Activated T-helper 1 cell treated with anti-CD3 and anti-CD28 coated beads, Interleukin-12 subunit alpha, Interleukin-12 subunit beta, Interleukin-2, Interleukin-4 antibody, amounts not matched to agents 30 ng/mL and 10 ng/mL and 1 ng/mL, durations not matched to agents 14 hours and 24 hours and 36 hours (primary cell): ENCODE measurements at regions of chr5 and their contacts with region 1.

Region 1: DNA sequence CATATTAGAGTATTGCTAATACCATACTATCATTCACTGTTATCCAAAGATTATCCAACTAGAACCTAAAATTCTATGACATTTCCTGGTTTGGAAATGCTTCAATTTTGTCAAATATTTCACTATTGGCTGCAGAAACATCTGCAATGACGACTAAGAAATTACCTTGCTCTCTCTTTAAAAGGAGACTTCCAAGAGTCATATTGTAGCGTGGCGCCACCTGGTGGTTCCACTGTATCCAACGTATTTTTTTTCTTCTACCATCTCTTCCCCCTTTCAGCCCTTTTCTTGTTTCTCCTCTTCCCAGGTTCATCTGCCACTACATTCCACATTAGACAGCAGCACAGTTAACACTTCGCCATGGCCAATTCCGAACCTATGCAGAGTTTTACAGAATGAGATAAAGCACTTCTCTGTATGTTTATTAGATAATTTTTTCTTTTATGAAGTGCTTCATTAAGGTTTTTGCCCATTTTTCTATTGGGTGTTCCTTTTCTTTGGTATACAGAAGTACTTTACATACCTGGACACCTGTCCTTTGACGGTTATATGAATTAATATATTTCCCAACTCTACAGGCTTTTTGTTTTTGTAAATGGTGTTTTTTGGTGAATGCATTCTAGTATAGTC is 153.5 kb downstream of the CDC42SE2 start:
- DNase-seq: peak; percentile 65
- H3K4me3 Mint-ChIP-seq: peak overlapping the region; percentile 32
- H3K27ac Mint-ChIP-seq: peak overlapping the region; percentile 59
- H3K4me1 Mint-ChIP-seq: peaks cover 37% of the 10 kb centered on the region
- H3K27me3 Mint-ChIP-seq: no peaks in the 10 kb centered on the region

Region 2: GRCh38 chr5:130109152-130109551 is 1308.2 kb before region 1 on chr5:
- intact Hi-C with region 1: loop called (anchors 5 kb)
- DNase-seq: no peak
- H3K4me3 Mint-ChIP-seq: no peak overlapping the region
- H3K27ac Mint-ChIP-seq: no peak overlapping the region
- H3K4me1 Mint-ChIP-seq: no peaks in the 10 kb centered on the region
- H3K27me3 Mint-ChIP-seq: peaks cover 2% of the 10 kb centered on the region

Region 3: DNA sequence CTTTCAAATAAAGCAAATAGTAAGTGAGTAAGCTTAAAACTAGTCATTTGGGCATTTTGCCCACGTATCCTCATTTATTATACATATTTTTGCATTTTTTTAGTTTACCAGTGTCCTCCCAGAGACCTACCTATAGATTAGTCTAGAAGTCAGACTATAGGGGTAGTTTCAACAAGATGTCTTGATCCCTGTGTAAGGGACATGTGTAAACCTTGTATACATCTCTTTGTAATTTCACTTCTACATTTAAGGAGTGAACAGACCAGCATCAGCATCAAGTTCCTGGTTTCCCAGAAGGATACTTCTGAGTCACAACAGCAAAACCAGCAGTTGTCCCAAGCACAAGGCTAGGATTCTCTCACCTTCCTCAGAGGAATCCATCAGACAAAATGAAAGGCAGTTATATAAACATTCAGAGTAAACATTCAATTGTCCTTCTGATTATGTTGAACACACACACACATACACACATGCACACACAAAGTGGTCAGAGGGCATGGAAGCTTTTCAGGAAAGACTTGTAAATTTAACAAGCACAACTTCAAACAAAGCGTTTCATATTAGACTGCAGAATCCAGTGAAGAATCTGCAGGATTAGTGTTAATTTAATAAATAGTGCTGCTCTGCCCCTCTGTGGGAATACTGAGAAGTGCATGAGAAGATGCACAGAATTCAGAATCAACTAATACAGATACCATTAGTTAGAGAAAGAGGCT is 307.7 kb before region 1 on chr5:
- intact Hi-C with region 1: loop called (anchors 1 kb)
- DNase-seq: peak; percentile 11
- H3K4me3 Mint-ChIP-seq: no peak overlapping the region
- H3K27ac Mint-ChIP-seq: no peak overlapping the region
- H3K4me1 Mint-ChIP-seq: peaks cover 17% of the 10 kb centered on the region
- H3K27me3 Mint-ChIP-seq: no peaks in the 10 kb centered on the region

Region 4: DNA sequence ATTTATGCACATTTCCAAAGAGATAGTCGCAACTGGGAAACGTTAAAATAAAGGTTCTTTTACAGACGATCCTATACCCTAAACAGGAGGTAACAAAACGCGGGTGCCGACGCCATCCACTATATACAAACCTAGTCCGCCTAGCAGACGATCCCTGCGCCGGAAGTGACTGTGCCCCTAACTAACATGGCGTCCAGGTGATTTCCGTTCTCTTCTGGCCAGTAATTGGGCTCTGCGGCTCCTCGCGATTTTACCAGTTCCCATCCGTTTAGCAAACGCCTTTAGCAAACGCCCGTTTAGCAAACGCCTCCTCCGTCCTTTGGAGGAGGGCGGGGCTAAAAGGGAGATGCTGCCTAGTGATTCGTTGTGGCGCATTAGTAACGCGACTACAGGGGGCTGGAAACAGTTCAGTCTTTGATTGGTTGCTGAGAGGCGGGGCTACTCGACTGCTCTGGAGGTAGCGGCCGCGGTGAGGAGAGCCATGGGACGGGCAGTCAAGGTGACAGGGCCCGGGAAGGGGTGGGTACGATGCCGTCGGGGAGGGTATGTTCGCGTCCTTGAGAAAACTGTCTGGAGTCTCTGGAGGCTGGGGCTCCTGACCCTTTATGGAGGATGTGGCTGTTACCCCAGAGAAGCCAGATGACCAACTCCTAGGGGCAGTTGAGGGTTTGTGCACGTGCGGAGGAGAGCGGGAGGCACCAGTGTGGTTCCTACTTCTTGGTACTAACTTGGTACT is 246.6 kb before region 1 on chr5 and contains the start of gene LYRM7:
- intact Hi-C with region 1: loop called (anchors 1 kb)
- DNase-seq: peak; percentile 96
- H3K4me3 Mint-ChIP-seq: peak within 1 kb of the TSS; percentile 99
- H3K27ac Mint-ChIP-seq: peak within 1 kb of the TSS; percentile 98
- H3K4me1 Mint-ChIP-seq: peaks cover 51% of the 10 kb centered on the region
- H3K27me3 Mint-ChIP-seq: no peaks in the 10 kb centered on the region
- total RNA-seq, gene LYRM7: 13.7 and 15.8 TPM in 2 replicates

Region 5: DNA sequence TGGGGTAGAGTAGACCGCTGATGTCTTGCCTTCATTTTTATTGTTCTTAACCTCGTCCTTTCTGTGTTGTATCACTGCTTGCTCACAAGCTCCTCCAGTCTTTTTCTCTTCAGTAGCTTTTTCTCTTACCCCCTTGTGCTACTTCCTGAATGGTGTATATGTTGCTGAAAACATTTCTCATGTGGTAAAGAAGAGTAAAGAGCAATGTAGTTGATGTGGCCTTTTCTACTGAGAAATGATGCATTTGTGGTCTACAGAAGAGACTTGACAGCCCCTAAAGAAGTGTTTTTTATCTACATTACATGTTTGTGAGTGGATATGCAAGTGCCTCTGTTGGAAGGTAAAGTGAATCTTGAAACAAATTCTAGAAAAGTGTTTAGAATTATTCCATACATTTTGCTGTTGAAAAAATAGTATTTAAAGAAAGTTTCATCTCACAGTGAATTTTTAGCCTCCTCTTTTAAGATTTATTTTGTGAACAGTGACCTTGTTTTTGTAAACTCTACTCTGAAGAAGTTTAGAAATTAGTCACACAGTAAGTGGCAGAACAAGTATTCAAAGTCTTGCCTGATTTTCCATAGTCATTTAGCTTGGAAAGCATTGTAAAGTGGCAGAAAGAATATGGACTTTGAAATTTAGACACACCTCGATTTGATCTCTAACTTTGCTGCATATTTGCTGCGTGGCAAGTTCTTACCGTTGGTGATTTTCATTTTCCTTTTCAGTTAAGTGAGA is 136.1 kb before region 1 on chr5:
- intact Hi-C with region 1: loop called (anchors 1 kb)
- DNase-seq: no peak
- H3K4me3 Mint-ChIP-seq: peak overlapping the region; percentile 86
- H3K27ac Mint-ChIP-seq: peak overlapping the region; percentile 91
- H3K4me1 Mint-ChIP-seq: peaks cover 78% of the 10 kb centered on the region
- H3K27me3 Mint-ChIP-seq: peaks cover 5% of the 10 kb centered on the region

Region 6: DNA sequence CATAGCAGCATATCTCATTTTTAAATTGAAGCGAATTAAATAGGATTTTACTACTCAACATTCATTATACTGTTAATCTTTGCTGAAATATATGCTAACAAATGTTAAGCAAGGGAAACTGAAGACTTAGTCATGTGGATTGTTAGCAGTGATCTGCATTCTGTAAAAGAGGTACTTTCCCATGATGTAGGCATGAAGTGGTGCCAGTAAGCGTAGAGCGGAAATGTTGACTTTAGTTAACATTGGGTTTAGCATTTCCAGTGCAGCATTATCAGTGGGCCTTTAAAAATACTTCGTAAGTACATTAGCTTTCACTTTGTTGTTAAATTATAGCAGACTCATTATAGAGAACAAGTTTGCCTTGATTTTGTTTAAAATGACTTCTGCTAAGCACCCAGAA is 23.2 kb before region 1 on chr5:
- intact Hi-C with region 1: loop called (anchors 1 kb)
- DNase-seq: peak; percentile 56
- H3K4me3 Mint-ChIP-seq: peak overlapping the region; percentile 81
- H3K27ac Mint-ChIP-seq: peak overlapping the region; percentile 95
- H3K4me1 Mint-ChIP-seq: peaks cover 84% of the 10 kb centered on the region
- H3K27me3 Mint-ChIP-seq: no peaks in the 10 kb centered on the region

Region 7: DNA sequence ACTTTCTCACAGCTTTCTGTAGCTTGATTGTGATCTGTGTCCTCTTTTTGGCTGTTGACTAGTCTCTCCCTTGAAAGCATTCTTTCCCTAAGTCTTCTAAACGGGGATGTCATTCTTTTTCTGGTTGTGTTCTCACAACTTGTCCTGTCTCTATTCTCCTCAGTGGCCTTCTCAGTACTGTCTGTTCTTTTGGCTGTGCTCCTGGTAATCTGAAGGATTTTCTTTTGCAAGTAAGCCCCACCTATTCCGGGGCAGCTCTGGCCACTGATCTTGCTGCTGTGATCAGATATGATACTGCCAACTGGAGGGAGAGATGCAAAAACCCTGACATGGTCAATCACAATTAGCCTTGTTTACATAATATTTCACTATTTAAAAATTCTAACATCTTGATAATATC is 18.7 kb after region 1 on chr5:
- intact Hi-C with region 1: no loop called
- DNase-seq: no peak
- H3K4me3 Mint-ChIP-seq: no peak overlapping the region
- H3K27ac Mint-ChIP-seq: no peak overlapping the region
- H3K4me1 Mint-ChIP-seq: no peaks in the 10 kb centered on the region
- H3K27me3 Mint-ChIP-seq: no peaks in the 10 kb centered on the region

Region 8: DNA sequence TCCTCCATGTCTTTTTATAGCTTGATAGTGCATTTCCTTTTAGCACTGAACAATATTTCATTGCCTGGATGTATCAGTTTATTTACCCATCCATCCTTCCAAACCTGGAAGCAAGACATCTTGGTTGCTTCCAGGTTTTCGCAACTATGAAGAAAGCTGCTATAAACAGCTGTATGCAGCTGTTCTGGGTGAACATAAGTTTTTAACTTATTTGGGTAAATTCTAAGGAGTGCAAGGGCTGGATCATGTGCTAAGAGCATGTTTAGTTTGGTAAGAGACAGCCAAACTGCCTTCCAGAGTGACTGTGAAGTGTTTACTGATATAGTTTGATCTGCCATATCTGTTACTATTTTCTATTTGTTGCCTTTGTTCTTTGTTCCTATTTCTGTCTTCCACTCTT is 714.8 kb after region 1 on chr5:
- intact Hi-C with region 1: no loop called
- DNase-seq: no peak
- H3K4me3 Mint-ChIP-seq: no peak overlapping the region
- H3K27ac Mint-ChIP-seq: no peak overlapping the region
- H3K4me1 Mint-ChIP-seq: peaks cover 27% of the 10 kb centered on the region
- H3K27me3 Mint-ChIP-seq: peaks cover 8% of the 10 kb centered on the region